Activated T-helper 1 cell treated with anti-CD3 and anti-CD28 coated beads, Interleukin-12 subunit alpha, Interleukin-12 subunit beta, Interleukin-2, Interleukin-4 antibody, amounts not matched to agents 30 ng/mL and 10 ng/mL and 1 ng/mL, durations not matched to agents 14 hours and 24 hours and 36 hours (primary cell): ENCODE measurements at regions of chrX and their contacts with region 1.

Region 1: DNA sequence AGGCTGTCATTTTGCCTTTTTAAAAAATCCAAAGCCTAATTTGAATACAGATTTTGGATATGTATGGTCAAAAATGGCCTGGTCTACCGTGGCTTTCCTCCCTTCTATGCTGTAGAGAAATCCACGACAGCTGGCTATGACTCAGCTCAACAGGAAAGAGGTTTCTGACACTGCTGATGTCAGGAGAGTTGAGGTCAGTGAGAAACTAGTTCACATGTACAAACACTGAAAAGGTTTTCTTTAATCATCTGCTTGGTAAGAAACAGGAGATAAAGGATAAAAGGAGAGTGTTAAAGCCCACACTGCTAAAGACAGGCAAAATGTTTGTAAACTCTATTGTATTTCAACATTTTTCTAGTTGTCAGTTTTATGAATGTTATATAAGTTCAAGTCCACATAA is 113.9 kb downstream of the NYX start:
- DNase-seq: peak; percentile 25
- H3K4me3 Mint-ChIP-seq: peak overlapping the region; percentile 56
- H3K27ac Mint-ChIP-seq: peak overlapping the region; percentile 80
- H3K4me1 Mint-ChIP-seq: peaks cover 57% of the 10 kb centered on the region
- H3K27me3 Mint-ChIP-seq: no peaks in the 10 kb centered on the region

Region 2: DNA sequence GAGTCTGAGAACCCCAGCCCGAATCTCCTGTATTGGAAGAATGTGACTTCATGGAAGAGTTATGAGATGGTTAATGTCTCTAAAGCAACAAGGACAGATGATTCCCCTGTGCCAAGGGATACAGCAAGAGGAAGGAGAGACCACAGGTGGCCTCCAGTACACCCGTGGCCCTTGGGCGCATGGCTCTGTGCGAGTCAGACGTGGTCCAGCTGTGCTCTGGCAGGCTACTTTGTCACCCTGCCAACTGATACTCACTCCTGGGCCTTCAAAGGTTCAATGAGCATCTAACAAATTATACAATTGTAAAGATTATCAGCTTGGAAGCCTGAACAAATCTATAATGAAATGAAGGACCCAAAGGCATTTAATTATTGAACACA is 42.2 kb before region 1 on chrX:
- intact Hi-C with region 1: loop called (anchors 1 kb)
- DNase-seq: no peak
- H3K4me3 Mint-ChIP-seq: no peak overlapping the region
- H3K27ac Mint-ChIP-seq: peak overlapping the region; percentile 67
- H3K4me1 Mint-ChIP-seq: peaks cover 55% of the 10 kb centered on the region
- H3K27me3 Mint-ChIP-seq: no peaks in the 10 kb centered on the region

Region 3: GRCh38 chrX:41695426-41695825 is 134.4 kb after region 1 on chrX:
- intact Hi-C with region 1: no loop called
- DNase-seq: no peak
- H3K4me3 Mint-ChIP-seq: no peak overlapping the region
- H3K27ac Mint-ChIP-seq: no peak overlapping the region
- H3K4me1 Mint-ChIP-seq: peaks cover 38% of the 10 kb centered on the region
- H3K27me3 Mint-ChIP-seq: no peaks in the 10 kb centered on the region

Region 4: GRCh38 chrX:41734530-41734929 is 173.5 kb after region 1 on chrX:
- intact Hi-C with region 1: loop called (anchors 1 kb)
- DNase-seq: no peak
- H3K4me3 Mint-ChIP-seq: peak overlapping the region; percentile 52
- H3K27ac Mint-ChIP-seq: peak overlapping the region; percentile 77
- H3K4me1 Mint-ChIP-seq: peaks cover 31% of the 10 kb centered on the region
- H3K27me3 Mint-ChIP-seq: no peaks in the 10 kb centered on the region

Region 5: GRCh38 chrX:42128020-42128419 is 567.0 kb after region 1 on chrX:
- intact Hi-C with region 1: loop called (anchors 5 kb)
- DNase-seq: no peak
- H3K4me3 Mint-ChIP-seq: peak overlapping the region; percentile 4
- H3K27ac Mint-ChIP-seq: peak overlapping the region; percentile 72
- H3K4me1 Mint-ChIP-seq: peaks cover 68% of the 10 kb centered on the region
- H3K27me3 Mint-ChIP-seq: no peaks in the 10 kb centered on the region